PC-9 (cell line): ENCODE measurements at regions of chr2 and their contacts with region 1.

Region 1: GRCh38 chr2:70142590-70143313 is 48.1 kb downstream of the C2orf42 start:
- DNase-seq: peak; percentile 93 to 99
- H3K4me3 ChIP-seq: peak overlapping the region; percentile 66
- H3K27ac ChIP-seq: peak overlapping the region; percentile 99
- H3K4me1 ChIP-seq: peaks cover 32% of the 10 kb centered on the region
- H3K27me3 ChIP-seq: no peaks in the 10 kb centered on the region
- CTCF ChIP-seq: peak; percentile 86

Region 2: GRCh38 chr2:69816923-69817542 is 325.7 kb before region 1 on chr2:
- CTCF ChIA-PET with region 1: no interaction called
- POLR2A ChIA-PET with region 1: no interaction called
- intact Hi-C with region 1: loop called (anchors 5 kb)
- DNase-seq: peak; percentile 59 to 81
- H3K4me3 ChIP-seq: no peak overlapping the region
- H3K27ac ChIP-seq: no peak overlapping the region
- H3K4me1 ChIP-seq: no peaks in the 10 kb centered on the region
- H3K27me3 ChIP-seq: no peaks in the 10 kb centered on the region
- CTCF ChIP-seq: peak; percentile 96

Region 3: GRCh38 chr2:70070541-70071268 is 72.0 kb before region 1 on chr2:
- CTCF ChIA-PET with region 1: interaction called, 7 read pairs
- POLR2A ChIA-PET with region 1: interaction called, 3 read pairs
- intact Hi-C with region 1: loop called (anchors 1 kb)
- DNase-seq: peak; percentile 44 to 53
- H3K4me3 ChIP-seq: no peak overlapping the region
- H3K27ac ChIP-seq: peak overlapping the region; percentile 9; the same call in 1 of the 2 replicates
- H3K4me1 ChIP-seq: no peaks in the 10 kb centered on the region
- H3K27me3 ChIP-seq: no peaks in the 10 kb centered on the region
- CTCF ChIP-seq: peak; percentile 85

Region 4: GRCh38 chr2:70086838-70087701 is 55.7 kb before region 1 on chr2 and contains the start of gene PCBP1:
- CTCF ChIA-PET with region 1: no interaction called
- POLR2A ChIA-PET with region 1: interaction called, 6 read pairs
- intact Hi-C with region 1: loop called (anchors 1 kb)
- DNase-seq: peak; percentile 85 to 90
- H3K4me3 ChIP-seq: peak within 1 kb of the TSS; percentile 98
- H3K27ac ChIP-seq: peak within 1 kb of the TSS; percentile 100
- H3K4me1 ChIP-seq: peaks cover 43% of the 10 kb centered on the region
- H3K27me3 ChIP-seq: no peaks in the 10 kb centered on the region
- CTCF ChIP-seq: no peak
- total RNA-seq, gene PCBP1: 148 and 227 TPM in 2 replicates

Region 5: GRCh38 chr2:70124983-70125480 is 17.7 kb before region 1 on chr2:
- CTCF ChIA-PET with region 1: no interaction called
- POLR2A ChIA-PET with region 1: interaction called, 4 read pairs
- intact Hi-C with region 1: loop called (anchors 2 kb)
- DNase-seq: no peak
- H3K4me3 ChIP-seq: peak overlapping the region; percentile 95
- H3K27ac ChIP-seq: peak overlapping the region; percentile 89
- H3K4me1 ChIP-seq: peaks cover 32% of the 10 kb centered on the region
- H3K27me3 ChIP-seq: no peaks in the 10 kb centered on the region
- CTCF ChIP-seq: no peak